Activated naive CD4-positive, alpha-beta T cell treated with anti-CD3 and anti-CD28 coated beads, Interleukin-2, amount 10 ng/mL, durations not matched to agents 7 days and 5 days (primary cell): ENCODE measurements at regions of chr11 and their contacts with region 1.

Region 1: DNA sequence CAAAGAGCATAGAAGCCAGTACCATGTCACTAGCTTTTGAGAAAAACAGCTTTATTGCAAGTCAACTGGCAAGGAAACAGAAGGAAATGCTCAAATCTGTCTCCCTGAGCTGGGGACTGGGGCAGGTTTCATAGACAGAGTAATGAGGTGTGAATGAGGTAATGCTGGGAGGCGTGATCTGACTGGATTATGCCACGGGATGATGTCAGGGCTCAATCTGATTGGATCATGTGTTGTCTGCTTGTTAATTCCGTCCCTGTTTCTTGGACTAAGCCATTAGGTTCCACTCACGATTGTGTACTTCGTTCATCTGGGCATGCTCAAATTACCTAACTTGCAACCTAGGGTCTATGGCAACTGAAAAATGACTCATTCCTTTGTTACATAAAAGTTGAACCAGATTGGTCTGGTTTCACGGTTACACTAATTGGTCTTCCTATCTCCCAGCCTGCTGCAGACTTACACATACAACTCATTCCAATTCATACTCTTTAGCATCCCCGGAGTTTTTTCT is 20.2 kb upstream of the OR10A5 start:
- DNase-seq: no peak
- H3K4me3 Mint-ChIP-seq: no peak overlapping the region
- H3K27ac Mint-ChIP-seq: no peak overlapping the region
- H3K4me1 Mint-ChIP-seq: no peaks in the 10 kb centered on the region
- H3K27me3 Mint-ChIP-seq: no peaks in the 10 kb centered on the region

Region 2: GRCh38 chr11:6812390-6813005 is 12.8 kb before region 1 on chr11:
- CTCF ChIA-PET with region 1: interaction called, 19 read pairs
- DNase-seq: peak; percentile 30
- H3K4me3 Mint-ChIP-seq: no peak overlapping the region
- H3K27ac Mint-ChIP-seq: no peak overlapping the region
- H3K4me1 Mint-ChIP-seq: no peaks in the 10 kb centered on the region
- H3K27me3 Mint-ChIP-seq: peaks cover 22% of the 10 kb centered on the region